Calu3 (cell line): ENCODE measurements at regions of chr12 and their contacts with region 1.

Region 1: DNA sequence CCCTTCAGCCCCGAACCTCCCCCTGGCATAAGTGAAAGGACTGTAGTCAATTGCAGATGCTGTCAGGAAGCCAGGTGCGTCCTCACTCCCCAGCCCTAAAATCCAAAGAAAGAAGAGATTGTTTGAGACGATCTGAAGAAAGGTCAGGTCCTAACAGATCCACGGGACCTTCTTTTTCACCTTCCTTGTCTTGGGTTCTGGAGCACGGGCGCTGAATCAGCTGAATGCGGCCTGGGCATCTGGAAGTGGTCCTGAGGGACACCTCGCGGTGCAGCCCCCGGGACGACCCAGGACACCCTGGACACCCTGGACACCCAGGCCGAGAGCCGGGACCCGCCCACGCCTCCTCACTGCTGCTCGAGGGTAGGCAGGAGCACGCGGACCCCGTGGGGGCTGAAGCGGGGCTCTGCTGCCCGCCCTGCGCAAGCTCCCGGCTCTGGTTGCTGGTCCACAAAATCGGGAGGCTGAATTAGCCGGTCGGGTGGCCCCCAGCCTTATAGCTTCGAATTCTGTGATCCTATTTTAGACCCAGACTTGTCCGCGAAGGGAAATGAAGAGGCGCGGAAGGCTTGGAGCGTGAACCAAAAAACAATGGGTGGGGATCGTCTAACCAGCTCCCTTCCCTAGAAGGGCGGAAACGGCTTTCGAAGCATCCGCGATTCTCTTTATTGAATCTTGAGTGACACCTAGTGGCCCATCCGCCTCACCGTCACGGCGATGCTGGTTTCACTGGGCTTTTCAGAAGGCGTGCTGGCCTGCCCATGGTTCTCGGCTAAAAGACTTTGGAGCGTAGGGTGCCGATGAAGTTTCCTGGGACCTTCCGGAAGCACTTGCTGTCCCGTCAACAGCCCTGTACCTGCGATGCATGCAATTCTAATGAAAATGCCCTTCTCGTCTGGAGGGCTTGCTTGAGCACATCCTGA is 46.4 kb upstream of the PLXNC1 start:
- DNase-seq: peak; percentile 86
- H3K4me3 Mint-ChIP-seq: peak overlapping the region; percentile 65
- H3K27ac Mint-ChIP-seq: no peak overlapping the region
- H3K4me1 Mint-ChIP-seq: peaks cover 17% of the 10 kb centered on the region
- H3K27me3 Mint-ChIP-seq: peaks cover 73% of the 10 kb centered on the region
- CTCF ChIP-seq: peak; percentile 90

Region 2: DNA sequence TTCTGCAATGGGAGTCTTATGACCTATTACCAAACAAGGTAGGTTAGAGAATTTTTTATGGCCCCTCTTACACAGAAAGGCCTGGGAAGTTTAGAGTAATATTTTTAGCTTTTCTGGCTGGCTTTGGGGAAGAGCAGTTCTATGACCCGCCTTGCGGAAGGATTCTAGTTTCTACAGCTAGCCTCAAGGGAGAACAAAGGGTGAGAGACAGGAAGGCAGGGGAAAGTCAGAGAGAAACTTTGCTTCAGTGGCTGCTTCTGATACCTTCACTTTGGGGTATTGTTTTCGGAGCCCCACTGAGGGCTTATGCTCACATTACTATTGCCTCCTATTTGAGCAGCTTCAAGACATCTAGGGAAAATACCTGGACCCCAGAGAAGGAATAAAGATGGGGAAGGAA is 805.0 kb before region 1 on chr12:
- CTCF ChIA-PET with region 1: no interaction called
- intact Hi-C with region 1: no loop called
- DNase-seq: no peak
- H3K4me3 Mint-ChIP-seq: no peak overlapping the region
- H3K27ac Mint-ChIP-seq: no peak overlapping the region
- H3K4me1 Mint-ChIP-seq: no peaks in the 10 kb centered on the region
- H3K27me3 Mint-ChIP-seq: no peaks in the 10 kb centered on the region
- CTCF ChIP-seq: no peak

Region 3: GRCh38 chr12:93419388-93420034 is 682.5 kb before region 1 on chr12:
- CTCF ChIA-PET with region 1: interaction called, 5 read pairs
- intact Hi-C with region 1: loop called (anchors 5 kb)
- DNase-seq: no peak
- H3K4me3 Mint-ChIP-seq: no peak overlapping the region
- H3K27ac Mint-ChIP-seq: peak overlapping the region; percentile 27
- H3K4me1 Mint-ChIP-seq: peaks cover 44% of the 10 kb centered on the region
- H3K27me3 Mint-ChIP-seq: no peaks in the 10 kb centered on the region
- CTCF ChIP-seq: peak; percentile 35

Region 4: GRCh38 chr12:93502802-93503623 is 599.0 kb before region 1 on chr12:
- CTCF ChIA-PET with region 1: interaction called, 64 read pairs
- intact Hi-C with region 1: loop called (anchors 2 kb)
- DNase-seq: peak; percentile 61
- H3K4me3 Mint-ChIP-seq: no peak overlapping the region
- H3K27ac Mint-ChIP-seq: no peak overlapping the region
- H3K4me1 Mint-ChIP-seq: no peaks in the 10 kb centered on the region
- H3K27me3 Mint-ChIP-seq: no peaks in the 10 kb centered on the region
- CTCF ChIP-seq: peak; percentile 71

Region 5: DNA sequence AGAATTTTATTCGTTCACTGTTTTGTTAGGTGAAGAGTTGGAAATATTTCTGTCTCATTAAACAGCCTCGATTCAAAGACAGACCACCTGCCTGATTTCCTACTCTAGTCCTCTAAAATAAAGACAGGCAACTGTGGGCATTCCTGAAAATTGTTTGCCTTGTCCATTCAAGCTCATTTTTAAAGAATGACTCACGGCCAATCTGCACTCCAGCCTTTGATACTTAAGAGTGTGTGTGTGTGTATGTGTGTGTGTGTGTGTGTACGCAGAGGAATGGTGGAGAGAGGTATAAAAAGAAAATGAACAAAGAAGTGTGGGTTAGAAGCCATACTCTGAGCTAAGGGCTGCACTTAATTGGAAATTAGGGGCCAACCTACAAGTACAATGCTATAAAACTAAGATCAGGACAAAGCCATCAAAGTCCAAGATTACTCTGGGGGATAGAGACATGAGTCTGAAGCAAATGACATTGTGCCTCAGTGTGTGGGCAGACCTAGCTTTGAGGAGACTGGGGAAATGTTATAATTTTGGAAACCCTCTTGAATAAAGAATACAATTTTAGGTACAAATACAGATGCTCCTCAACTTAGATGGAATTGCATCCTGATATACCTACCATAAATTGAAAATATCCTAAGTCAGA is 575.1 kb before region 1 on chr12:
- CTCF ChIA-PET with region 1: interaction called, 12 read pairs
- intact Hi-C with region 1: no loop called
- DNase-seq: peak; percentile 76
- H3K4me3 Mint-ChIP-seq: no peak overlapping the region
- H3K27ac Mint-ChIP-seq: no peak overlapping the region
- H3K4me1 Mint-ChIP-seq: peaks cover 28% of the 10 kb centered on the region
- H3K27me3 Mint-ChIP-seq: no peaks in the 10 kb centered on the region
- CTCF ChIP-seq: no peak

Region 6: GRCh38 chr12:93569656-93570551 is 532.1 kb before region 1 on chr12:
- CTCF ChIA-PET with region 1: interaction called, 61 read pairs
- intact Hi-C with region 1: loop called (anchors 1 kb)
- DNase-seq: peak; percentile 89
- H3K4me3 Mint-ChIP-seq: peak overlapping the region; percentile 90
- H3K27ac Mint-ChIP-seq: peak overlapping the region; percentile 79
- H3K4me1 Mint-ChIP-seq: peaks cover 11% of the 10 kb centered on the region
- H3K27me3 Mint-ChIP-seq: peaks cover 28% of the 10 kb centered on the region
- CTCF ChIP-seq: peak; percentile 83

Region 7: DNA sequence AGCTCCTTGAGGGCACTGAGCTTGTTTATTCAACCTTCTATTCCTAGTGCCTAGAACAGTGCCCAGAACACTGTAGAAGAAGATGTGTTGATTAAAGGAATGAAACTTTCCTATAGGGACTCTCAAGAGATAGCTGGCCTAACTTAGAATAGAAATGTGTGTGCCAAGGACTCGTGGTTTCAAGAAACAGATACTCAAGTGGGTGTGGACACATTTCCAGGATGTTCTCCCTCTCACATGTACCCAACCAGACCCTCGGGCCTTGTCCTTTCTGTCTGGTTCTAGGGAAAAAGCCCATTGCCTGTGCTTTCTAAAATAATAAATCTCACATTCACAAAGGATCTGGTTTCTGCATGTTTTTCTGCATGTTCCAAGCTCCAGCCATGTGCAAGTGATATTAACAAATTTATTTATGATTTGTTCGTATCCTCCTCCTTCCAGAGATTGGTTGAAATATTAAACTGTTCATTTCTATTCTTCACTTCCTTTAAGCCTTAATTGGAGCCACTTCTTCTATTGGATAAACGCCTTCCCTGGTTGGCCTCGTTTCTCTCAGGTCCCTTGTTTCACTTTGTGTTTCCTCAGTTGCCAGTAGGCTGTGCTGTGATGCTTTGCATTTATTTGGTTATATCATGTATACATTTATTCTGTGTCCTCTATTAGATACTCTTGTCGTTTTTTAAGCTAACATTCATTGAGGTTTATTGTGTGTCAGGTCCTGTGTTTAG is 335.0 kb before region 1 on chr12:
- CTCF ChIA-PET with region 1: interaction called, 34 read pairs
- intact Hi-C with region 1: loop called (anchors 1 kb)
- DNase-seq: peak; percentile 40
- H3K4me3 Mint-ChIP-seq: no peak overlapping the region
- H3K27ac Mint-ChIP-seq: no peak overlapping the region
- H3K4me1 Mint-ChIP-seq: peaks cover 9% of the 10 kb centered on the region
- H3K27me3 Mint-ChIP-seq: no peaks in the 10 kb centered on the region
- CTCF ChIP-seq: peak; percentile 24

Region 8: DNA sequence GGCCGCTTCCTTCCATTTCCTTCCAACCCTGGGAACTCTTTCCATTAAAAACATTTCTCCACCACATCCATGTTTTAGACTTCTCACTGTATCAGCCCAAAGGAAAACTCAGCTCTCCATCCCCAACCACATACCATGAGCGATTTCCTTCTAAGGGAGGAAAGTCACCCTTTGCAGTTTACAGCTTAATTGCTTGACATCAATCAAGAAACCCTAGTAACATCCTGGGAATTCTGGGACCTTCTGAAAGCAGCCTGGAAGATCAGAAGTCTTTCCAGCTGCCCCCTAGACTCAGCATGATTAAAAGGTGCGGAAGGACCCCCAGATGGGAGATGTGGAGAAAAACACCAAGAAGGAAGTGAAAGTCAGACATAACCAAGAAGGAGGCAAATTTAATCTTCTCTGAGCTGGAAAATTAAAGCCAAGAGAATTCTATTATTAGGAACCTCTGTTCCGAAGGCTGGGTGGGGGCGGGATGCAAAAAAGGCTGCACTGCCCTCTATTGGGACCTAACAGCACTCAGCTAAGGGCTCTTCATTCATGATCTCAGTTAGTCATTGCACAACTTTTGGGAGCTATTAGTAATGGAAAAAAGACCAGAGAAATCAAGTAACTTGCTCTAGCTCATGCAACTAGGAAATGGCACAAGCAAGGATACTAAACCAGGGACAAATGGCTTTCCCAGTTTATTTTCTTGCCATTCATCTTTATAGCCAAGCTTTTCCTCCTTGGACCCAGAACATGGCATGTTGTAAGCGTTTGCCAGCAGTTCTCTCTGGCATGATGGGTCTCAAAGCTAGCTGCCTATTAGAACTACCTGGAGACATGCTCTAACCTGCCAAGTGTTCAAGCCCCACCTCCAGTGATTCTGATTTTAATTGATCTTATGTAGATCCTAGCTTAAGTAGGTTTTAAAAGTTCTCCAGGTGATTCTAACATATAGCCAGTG is 26.7 kb before region 1 on chr12:
- CTCF ChIA-PET with region 1: interaction called, 10 read pairs
- intact Hi-C with region 1: no loop called
- DNase-seq: no peak
- H3K4me3 Mint-ChIP-seq: no peak overlapping the region
- H3K27ac Mint-ChIP-seq: no peak overlapping the region
- H3K4me1 Mint-ChIP-seq: no peaks in the 10 kb centered on the region
- H3K27me3 Mint-ChIP-seq: peaks cover 68% of the 10 kb centered on the region
- CTCF ChIP-seq: no peak